MCF 10A (cell line): ENCODE measurements at regions of chr12 and their contacts with region 1.

Region 1: DNA sequence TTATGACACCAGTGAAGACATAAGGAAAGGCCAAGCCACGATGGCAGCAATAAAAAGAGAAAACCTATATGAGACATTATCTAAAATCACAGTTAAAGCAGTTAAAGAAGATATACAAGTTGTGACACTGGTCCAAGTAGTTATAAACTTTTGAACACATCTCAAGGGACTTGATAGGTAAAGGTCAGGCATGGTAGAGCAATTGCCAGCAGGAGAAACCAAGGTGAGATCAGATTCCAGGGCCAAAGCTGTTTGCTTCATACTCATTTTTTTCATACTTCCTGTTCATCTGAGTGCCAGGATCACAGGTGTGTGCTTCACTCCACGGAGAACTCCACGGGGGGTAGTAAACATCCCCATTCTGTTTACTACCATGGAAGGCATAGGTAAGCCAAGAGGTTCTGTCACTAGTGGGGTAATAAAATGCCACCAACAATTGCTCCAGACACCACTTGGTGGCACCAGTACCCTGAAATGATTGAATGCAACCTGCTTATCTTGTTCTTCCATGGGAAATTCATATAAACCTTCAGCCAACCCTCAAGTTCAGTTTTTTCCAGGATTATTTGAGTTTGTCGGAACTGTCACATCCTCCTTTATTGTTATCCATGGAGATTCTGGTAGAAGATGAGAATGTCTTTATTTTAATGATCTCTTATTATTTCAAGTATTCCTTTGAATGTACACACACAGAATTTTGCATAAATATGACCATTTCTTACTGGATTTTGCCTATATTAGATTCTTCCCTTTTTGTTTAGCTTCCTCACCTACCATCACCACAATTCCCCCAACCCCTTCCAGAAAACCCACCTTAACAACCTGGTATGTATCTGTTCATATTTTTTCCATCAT is 59.2 kb upstream of the TSPAN8 start:
- DNase-seq: peak; percentile 69
- H3K4me3 Mint-ChIP-seq: no peak overlapping the region
- H3K27ac Mint-ChIP-seq: no peak overlapping the region
- H3K4me1 Mint-ChIP-seq: no peaks in the 10 kb centered on the region
- H3K27me3 Mint-ChIP-seq: no peaks in the 10 kb centered on the region
- CTCF ChIP-seq: peak; percentile 55

Region 2: DNA sequence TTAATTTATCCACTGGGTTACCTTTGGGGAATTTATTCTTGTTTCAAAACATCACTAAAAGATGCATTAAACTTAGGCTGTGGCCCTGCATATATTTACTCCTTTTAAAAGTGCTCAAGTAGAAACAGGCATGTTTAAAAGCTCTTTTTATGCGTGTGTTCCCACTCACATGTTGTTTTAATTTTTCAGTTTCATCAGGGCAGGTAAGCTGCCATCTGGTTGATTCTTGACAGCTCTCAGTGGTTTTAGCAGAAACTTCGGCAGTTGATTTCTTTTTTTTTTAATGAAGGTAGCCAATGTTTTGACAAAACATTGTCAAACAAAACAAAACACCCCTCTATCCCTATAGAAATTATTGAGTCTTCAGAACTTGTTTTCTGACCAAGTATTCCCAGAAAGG is 133.0 kb after region 1 on chr12:
- CTCF ChIA-PET with region 1: no interaction called
- POLR2A ChIA-PET with region 1: no interaction called
- intact Hi-C with region 1: no loop called
- DNase-seq: no peak
- H3K4me3 Mint-ChIP-seq: no peak overlapping the region
- H3K27ac Mint-ChIP-seq: no peak overlapping the region
- H3K4me1 Mint-ChIP-seq: no peaks in the 10 kb centered on the region
- H3K27me3 Mint-ChIP-seq: peaks cover 1% of the 10 kb centered on the region
- CTCF ChIP-seq: no peak

Region 3: GRCh38 chr12:71371122-71371521 is 154.2 kb after region 1 on chr12:
- CTCF ChIA-PET with region 1: interaction called, 23 read pairs
- POLR2A ChIA-PET with region 1: no interaction called
- intact Hi-C with region 1: loop called (anchors 1 kb)
- DNase-seq: peak; percentile 16
- H3K4me3 Mint-ChIP-seq: no peak overlapping the region
- H3K27ac Mint-ChIP-seq: no peak overlapping the region
- H3K4me1 Mint-ChIP-seq: no peaks in the 10 kb centered on the region
- H3K27me3 Mint-ChIP-seq: no peaks in the 10 kb centered on the region
- CTCF ChIP-seq: peak; percentile 15

Region 4: GRCh38 chr12:71392521-71393145 is 175.7 kb after region 1 on chr12:
- CTCF ChIA-PET with region 1: interaction called, 80 read pairs
- POLR2A ChIA-PET with region 1: interaction called, 6 read pairs
- intact Hi-C with region 1: loop called (anchors 1 kb)
- DNase-seq: peak; percentile 70
- H3K4me3 Mint-ChIP-seq: no peak overlapping the region
- H3K27ac Mint-ChIP-seq: no peak overlapping the region
- H3K4me1 Mint-ChIP-seq: no peaks in the 10 kb centered on the region
- H3K27me3 Mint-ChIP-seq: no peaks in the 10 kb centered on the region
- CTCF ChIP-seq: peak; percentile 67

Region 5: GRCh38 chr12:71551529-71551928 is 334.6 kb after region 1 on chr12:
- CTCF ChIA-PET with region 1: interaction called, 10 read pairs
- POLR2A ChIA-PET with region 1: no interaction called
- intact Hi-C with region 1: loop called (anchors 1 kb)
- DNase-seq: peak; percentile 41
- H3K4me3 Mint-ChIP-seq: no peak overlapping the region
- H3K27ac Mint-ChIP-seq: no peak overlapping the region
- H3K4me1 Mint-ChIP-seq: no peaks in the 10 kb centered on the region
- H3K27me3 Mint-ChIP-seq: no peaks in the 10 kb centered on the region
- CTCF ChIP-seq: peak; percentile 44